ENCODE measurements at regions of chr3 and their contacts with region 1.

Region 1: DNA sequence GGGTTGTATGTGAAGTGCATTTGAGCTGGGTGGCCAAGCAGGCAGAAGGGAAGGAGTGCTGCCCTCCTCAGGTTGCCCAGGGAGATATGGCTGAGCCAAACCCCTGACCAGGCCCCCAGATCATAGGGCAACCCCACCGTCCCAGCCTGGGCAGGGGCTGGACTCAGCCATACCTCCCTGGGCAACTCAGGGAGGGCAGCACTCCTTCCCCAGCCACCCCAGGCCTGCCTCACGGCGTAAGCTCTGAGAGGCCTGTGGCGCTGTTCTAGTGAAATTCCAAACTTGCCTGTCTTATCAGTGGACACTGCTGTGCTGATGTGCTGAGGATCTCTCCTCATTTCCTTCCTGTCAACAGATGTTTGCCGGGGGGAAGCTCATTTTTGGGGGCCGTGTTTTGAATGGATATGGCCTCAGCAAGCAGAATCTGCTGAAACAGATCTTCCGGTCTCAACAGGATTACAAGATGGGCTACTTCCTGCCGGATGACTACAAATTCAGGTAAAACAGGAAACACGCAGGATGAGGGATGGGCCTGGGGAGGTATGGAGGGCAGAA is 57.6 kb upstream of the FGD5 start:
- DNase-seq: peak; percentile 97 to 100 (median 99)
- H3K4me3 ChIP-seq: peak overlapping the region in 4 of 7 experiments; percentile 2 to 43 (median 19)
- H3K27ac ChIP-seq: peak overlapping the region; percentile 44 to 82
- H3K4me1 ChIP-seq: peaks cover 0 to 23% (median 18%) of the 10 kb centered on the region in 4 experiments
- H3K27me3 ChIP-seq: no peaks in the 10 kb centered on the region

Region 2: GRCh38 chr3:14602006-14602803 is 159.0 kb before region 1 on chr3:
- CTCF ChIA-PET with region 1: no interaction called
- POLR2A ChIA-PET with region 1: no interaction called
- DNase-seq: no peak
- H3K4me3 ChIP-seq: peak overlapping the region in 3 of 7 experiments; percentile 3 to 46 (median 38)
- H3K27ac ChIP-seq: no peak overlapping the region
- H3K4me1 ChIP-seq: peaks cover 0 to 7% (median 3%) of the 10 kb centered on the region in 4 experiments
- H3K27me3 ChIP-seq: peaks cover 12 to 99% (median 43%) of the 10 kb centered on the region in 5 experiments

Region 3: GRCh38 chr3:14750650-14751049 is 10.5 kb before region 1 on chr3:
- CTCF ChIA-PET with region 1: interaction called, 13 read pairs
- POLR2A ChIA-PET with region 1: no interaction called
- DNase-seq: peak in 2 of 3 donors; percentile 9 to 16
- H3K4me3 ChIP-seq: no peak overlapping the region
- H3K27ac ChIP-seq: no peak overlapping the region
- H3K4me1 ChIP-seq: no peaks in the 10 kb centered on the region
- H3K27me3 ChIP-seq: no peaks in the 10 kb centered on the region

Region 4: GRCh38 chr3:14810070-14810784 is 49.0 kb after region 1 on chr3:
- CTCF ChIA-PET with region 1: no interaction called
- POLR2A ChIA-PET with region 1: no interaction called
- DNase-seq: peak in 2 of 3 donors; percentile 25 to 48
- H3K4me3 ChIP-seq: peak overlapping the region; percentile 61 to 87 (median 79)
- H3K27ac ChIP-seq: no peak overlapping the region
- H3K4me1 ChIP-seq: peaks cover 3 to 71% (median 45%) of the 10 kb centered on the region in 4 experiments
- H3K27me3 ChIP-seq: peaks cover 0 to 3% (median 0%) of the 10 kb centered on the region in 5 experiments

Region 5: DNA sequence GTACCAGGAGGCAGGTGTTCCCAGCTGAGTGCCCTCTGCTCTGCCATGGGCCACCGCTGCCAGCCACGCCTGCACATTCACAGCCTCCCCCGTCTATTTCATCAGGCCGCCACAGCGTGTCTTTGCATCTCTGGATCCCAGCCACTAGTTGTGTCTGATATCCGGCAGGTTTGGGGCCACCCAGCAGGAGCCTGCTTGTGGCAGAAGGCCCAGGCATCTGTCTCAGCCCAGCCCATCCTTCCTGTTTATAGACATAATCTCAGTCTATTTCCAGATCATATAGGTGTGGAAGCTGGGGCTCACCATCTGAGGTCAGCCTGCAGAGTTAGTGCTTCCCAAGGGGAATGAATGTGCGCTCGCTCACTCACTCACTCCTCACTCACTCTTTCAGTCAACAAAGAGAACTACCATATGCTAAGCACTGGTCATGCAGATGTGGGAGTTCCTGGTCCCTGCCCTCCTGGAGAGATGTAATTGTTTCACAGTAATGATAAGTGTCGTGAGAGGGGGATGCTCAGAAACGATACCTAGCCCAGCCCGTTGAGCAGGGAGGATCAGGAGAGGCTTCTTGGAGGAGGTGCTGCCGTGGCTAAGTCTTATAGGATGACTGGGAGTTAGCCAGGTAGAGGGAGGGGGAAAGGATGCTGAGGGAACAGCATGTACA is 118.1 kb after region 1 on chr3:
- CTCF ChIA-PET with region 1: no interaction called
- POLR2A ChIA-PET with region 1: no interaction called
- DNase-seq: peak in 2 of 3 donors; percentile 11 to 14
- H3K4me3 ChIP-seq: no peak overlapping the region
- H3K27ac ChIP-seq: no peak overlapping the region
- H3K4me1 ChIP-seq: peaks cover 7 to 35% (median 25%) of the 10 kb centered on the region in 4 experiments
- H3K27me3 ChIP-seq: no peaks in the 10 kb centered on the region

Measured in common myeloid progenitor, CD34-positive (primary cell).